Pancreas (tissue), 10 donors: ENCODE measurements at regions of chr4 and their contacts with region 1.

Region 1: DNA sequence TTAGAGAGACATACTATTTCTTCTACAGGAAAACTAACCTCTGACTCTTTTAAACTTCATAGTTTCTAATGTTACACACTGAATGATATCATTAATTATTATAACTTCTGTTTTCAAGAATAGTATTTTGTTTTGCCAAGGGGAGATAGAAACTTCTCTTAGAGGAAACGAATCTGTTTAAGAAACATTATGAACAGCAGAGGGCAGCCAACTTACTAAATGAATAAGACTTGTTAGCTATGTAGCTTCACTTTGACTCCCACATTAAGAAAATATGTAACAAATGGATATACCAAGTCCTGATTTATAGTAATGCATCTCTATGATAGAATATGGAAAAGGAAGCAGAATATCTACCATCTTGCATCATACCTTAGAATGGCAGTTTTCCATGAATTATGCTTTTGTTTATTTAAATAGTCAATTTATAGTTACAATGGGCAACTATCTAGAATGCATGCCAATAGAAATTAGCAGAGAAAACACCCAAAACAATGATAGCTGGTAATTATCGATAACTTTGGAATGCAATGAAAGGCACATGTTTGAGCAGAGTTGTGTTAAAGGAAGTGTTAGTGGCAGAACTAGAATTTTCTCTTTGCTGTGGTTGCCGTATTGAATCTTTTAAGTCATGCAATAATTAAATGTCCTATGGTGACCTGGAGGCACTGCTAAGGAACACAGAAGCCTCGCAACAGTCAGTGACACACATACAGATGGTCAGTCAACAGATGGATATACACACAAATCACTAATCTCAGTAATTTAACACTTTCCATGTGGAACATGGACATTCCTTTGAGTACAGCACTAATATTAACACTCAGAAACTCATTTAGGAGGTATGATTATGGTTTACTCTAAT is 105.7 kb upstream of the PDLIM3 start:
- DNase-seq: no peak
- ATAC-seq: peak in 3 of 4 donors; percentile 54 to 66 (median 64)
- H3K4me3 ChIP-seq: no peak overlapping the region
- H3K27ac ChIP-seq: peak overlapping the region in 1 of 4 donors; percentile 24
- H3K4me1 ChIP-seq: peaks cover 0 to 9% (median 0%) of the 10 kb centered on the region in 3 donors
- H3K27me3 ChIP-seq: no peaks in the 10 kb centered on the region
- CTCF ChIP-seq: peak in 1 of 4 donors; percentile 17

Region 2: GRCh38 chr4:186015212-186015785 is 374.3 kb after region 1 on chr4:
- intact Hi-C with region 1: loop called in 1 of 3 experiments (anchors 10 kb)
- DNase-seq: no peak
- ATAC-seq: peak in 2 of 4 donors; percentile 63 to 77
- H3K4me3 ChIP-seq: no peak overlapping the region
- H3K27ac ChIP-seq: no peak overlapping the region
- H3K4me1 ChIP-seq: no peaks in the 10 kb centered on the region
- H3K27me3 ChIP-seq: no peaks in the 10 kb centered on the region
- CTCF ChIP-seq: no peak

Region 3: DNA sequence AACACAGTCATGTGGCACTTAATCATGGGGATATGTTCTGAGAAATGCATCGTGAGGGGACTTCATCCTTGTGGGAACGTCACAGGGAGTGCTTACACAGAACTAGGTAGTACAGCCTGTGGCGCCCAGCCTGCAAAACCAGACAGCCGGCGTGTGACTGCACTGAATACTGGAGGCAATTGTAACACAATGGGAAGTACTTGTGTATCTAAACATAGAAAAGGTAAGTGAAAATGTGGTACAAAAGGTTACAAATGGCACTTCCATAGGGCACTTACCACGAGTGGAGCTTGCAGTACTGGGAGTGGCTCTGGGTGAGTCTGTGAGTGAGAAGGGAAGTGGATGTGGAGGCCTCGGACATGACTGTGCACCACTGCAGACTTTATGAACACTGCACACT is 433.1 kb after region 1 on chr4:
- intact Hi-C with region 1: no loop called
- DNase-seq: no peak
- ATAC-seq: peak in 1 of 4 donors; percentile 48
- H3K4me3 ChIP-seq: no peak overlapping the region
- H3K27ac ChIP-seq: no peak overlapping the region
- H3K4me1 ChIP-seq: peaks cover 0 to 11% (median 5%) of the 10 kb centered on the region in 3 donors
- H3K27me3 ChIP-seq: no peaks in the 10 kb centered on the region
- CTCF ChIP-seq: no peak